Naive thymus-derived CD4-positive, alpha-beta T cell (primary cell): ENCODE measurements at regions of chr3 and their contacts with region 1.

Region 1: GRCh38 chr3:12984023-12984823 is 89.0 kb downstream of the IQSEC1 start:
- DNase-seq: peak in 8 of 9 donors; percentile 41 to 69 (median 58)
- ATAC-seq: peak; percentile 82
- H3K4me3 ChIP-seq: no peak overlapping the region
- H3K4me3 Mint-ChIP-seq: no peak overlapping the region
- H3K27ac ChIP-seq: peak overlapping the region; percentile 11
- H3K27ac Mint-ChIP-seq: peak overlapping the region in 4 of 9 donors; percentile 27 to 79 (median 50)
- H3K4me1 ChIP-seq: peaks cover 29 to 32% of the 10 kb centered on the region in 2 donors
- H3K4me1 Mint-ChIP-seq: peaks cover 29 to 77% (median 67%) of the 10 kb centered on the region in 7 donors
- H3K27me3 ChIP-seq: no peaks in the 10 kb centered on the region
- H3K27me3 Mint-ChIP-seq: no peaks in the 10 kb centered on the region

Region 2: GRCh38 chr3:12719984-12720898 is 264.0 kb before region 1 on chr3:
- CTCF ChIA-PET with region 1: no interaction called
- POLR2A ChIA-PET with region 1: no interaction called
- intact Hi-C with region 1: no loop called
- DNase-seq: peak; percentile 37 to 85 (median 81)
- ATAC-seq: peak; percentile 98
- H3K4me3 ChIP-seq: peak overlapping the region; percentile 50
- H3K4me3 Mint-ChIP-seq: peak overlapping the region; percentile 30 to 79 (median 72)
- H3K27ac ChIP-seq: no peak overlapping the region
- H3K27ac Mint-ChIP-seq: peak overlapping the region; percentile 46 to 93 (median 74)
- H3K4me1 ChIP-seq: peaks cover 0 to 5% of the 10 kb centered on the region in 2 donors
- H3K4me1 Mint-ChIP-seq: peaks cover 6 to 12% (median 9%) of the 10 kb centered on the region in 7 donors
- H3K27me3 ChIP-seq: no peaks in the 10 kb centered on the region
- H3K27me3 Mint-ChIP-seq: no peaks in the 10 kb centered on the region

Region 3: DNA sequence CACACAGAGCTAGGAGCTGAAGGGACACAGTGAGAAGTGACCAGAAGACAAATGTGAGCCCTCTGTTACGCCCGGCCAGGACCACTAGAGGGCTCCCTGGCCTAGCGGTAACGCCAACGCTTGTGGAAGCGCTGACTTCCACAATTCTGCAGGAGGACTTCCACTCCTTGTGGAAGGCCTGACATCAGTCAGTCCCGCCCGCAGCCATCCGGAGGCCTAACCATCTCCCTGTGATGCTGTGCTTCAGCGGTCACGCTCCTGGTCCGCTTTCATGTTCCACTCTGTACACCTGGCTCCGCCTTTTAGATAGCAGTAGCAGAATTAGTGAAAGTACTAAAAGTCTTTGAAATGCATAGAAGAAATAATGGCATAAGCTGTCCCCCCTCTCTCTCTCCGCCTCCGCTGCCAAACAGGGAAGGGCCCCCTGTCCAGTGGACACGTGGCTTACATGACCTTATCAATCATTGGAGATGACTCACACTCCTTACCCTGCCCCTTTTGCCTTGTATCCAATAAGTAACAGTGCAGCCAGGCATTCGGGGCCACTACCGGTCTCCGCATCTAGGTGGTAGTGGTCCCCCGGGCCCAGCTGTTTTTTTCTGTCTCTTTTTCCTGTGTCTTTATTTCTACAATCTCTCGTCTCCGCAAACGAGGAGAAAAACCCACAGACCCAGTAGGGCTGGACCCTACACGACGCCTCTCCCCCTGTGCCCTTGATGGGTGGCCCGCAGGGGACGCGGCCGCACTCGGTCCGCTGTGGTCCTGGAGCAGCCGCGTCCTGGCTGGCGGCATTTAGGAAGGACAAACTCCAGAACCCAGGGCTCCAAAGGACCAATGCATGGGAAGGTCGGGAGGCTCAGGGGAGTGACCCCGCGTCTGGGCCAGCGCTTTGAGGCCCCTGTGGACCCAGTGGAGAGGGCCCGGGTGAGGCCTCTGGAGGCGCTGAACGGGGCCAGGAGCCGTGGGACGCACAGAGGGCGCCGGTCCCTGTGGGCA is 115.9 kb before region 1 on chr3:
- CTCF ChIA-PET with region 1: no interaction called
- POLR2A ChIA-PET with region 1: no interaction called
- intact Hi-C with region 1: loop called (anchors 1 kb)
- DNase-seq: peak; percentile 32 to 68 (median 50)
- ATAC-seq: peak; percentile 87
- H3K4me3 ChIP-seq: peak overlapping the region; percentile 60
- H3K4me3 Mint-ChIP-seq: peak overlapping the region; percentile 79 to 92 (median 86)
- H3K27ac ChIP-seq: no peak overlapping the region
- H3K27ac Mint-ChIP-seq: peak overlapping the region in 2 of 9 donors; percentile 4 to 53
- H3K4me1 ChIP-seq: no peaks in the 10 kb centered on the region
- H3K4me1 Mint-ChIP-seq: peaks cover 0 to 14% (median 10%) of the 10 kb centered on the region in 7 donors
- H3K27me3 ChIP-seq: peaks cover 0 to 5% of the 10 kb centered on the region in 2 donors
- H3K27me3 Mint-ChIP-seq: peaks cover 9 to 35% (median 14%) of the 10 kb centered on the region in 5 donors

Region 4: DNA sequence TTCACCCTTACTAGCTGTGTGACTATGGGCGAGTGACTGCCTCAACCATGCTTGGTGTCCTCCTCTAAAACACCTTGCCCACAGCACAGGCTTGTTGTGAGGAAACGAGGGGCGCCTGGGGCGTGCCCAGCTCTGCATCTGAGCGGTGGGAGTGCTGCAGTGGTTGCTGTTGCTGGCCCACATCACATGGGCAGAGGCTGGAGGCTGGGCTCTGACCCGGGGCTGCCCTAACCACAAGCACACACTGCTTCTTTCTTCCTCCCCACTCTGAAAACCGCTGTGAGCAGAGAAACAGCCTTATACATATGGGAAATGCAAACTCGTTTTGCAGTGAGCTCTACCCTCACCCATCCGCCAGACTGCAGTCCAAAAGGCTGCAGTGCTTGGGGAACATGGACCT is 68.1 kb before region 1 on chr3:
- CTCF ChIA-PET with region 1: no interaction called
- POLR2A ChIA-PET with region 1: no interaction called
- intact Hi-C with region 1: loop called (anchors 1 to 5 kb)
- DNase-seq: peak in 5 of 9 donors; percentile 8 to 29 (median 24)
- ATAC-seq: peak; percentile 78
- H3K4me3 ChIP-seq: no peak overlapping the region
- H3K4me3 Mint-ChIP-seq: peak overlapping the region in 9 of 10 donors; percentile 34 to 61 (median 48)
- H3K27ac ChIP-seq: no peak overlapping the region
- H3K27ac Mint-ChIP-seq: peak overlapping the region; percentile 38 to 87 (median 75)
- H3K4me1 ChIP-seq: peaks cover 12 to 24% of the 10 kb centered on the region in 2 donors
- H3K4me1 Mint-ChIP-seq: peaks cover 17 to 30% (median 24%) of the 10 kb centered on the region in 7 donors
- H3K27me3 ChIP-seq: no peaks in the 10 kb centered on the region
- H3K27me3 Mint-ChIP-seq: no peaks in the 10 kb centered on the region

Region 5: DNA sequence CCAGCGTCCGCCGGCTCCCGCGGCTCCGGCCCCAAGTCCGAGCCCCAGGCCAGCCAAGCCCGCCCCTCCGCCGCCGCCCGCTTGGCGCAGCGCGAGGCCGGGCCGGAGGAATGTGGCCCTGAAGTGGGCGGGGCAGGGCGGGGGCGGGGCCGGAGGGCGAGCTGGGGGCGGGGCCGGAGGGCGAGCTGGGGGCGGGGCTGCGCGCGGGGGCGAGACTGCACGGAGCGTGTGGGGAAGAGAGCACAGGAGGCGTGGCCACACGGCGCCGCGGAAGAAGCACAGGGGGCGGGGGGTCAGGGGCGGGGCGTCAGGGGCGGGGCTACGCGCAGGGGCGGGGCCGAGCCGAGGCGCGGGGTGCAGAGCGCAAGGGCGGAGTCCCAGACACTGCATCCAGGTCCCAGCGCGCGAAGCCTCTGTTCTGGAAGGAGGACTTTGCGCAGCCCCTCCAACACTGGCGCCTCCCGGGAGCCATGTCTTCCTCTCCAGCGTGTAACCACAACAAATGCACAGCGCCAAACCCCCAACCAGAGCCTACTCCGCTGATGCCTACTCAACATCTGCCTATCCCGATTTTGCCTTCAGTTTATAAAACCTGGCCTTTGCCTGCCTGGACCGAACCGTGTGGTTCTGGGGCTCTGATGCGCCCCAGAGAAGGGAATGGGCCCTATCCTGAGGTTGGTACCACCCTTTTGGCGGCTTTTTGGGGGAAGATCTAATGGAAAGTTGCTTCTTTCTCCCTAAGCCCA is 16.4 kb before region 1 on chr3:
- CTCF ChIA-PET with region 1: interaction called, 4 read pairs
- POLR2A ChIA-PET with region 1: interaction called, 7 read pairs
- intact Hi-C with region 1: loop called in 1 of 2 experiments (anchors 2 kb)
- DNase-seq: peak; percentile 71 to 87 (median 83)
- ATAC-seq: peak; percentile 99
- H3K4me3 ChIP-seq: peak overlapping the region; percentile 47
- H3K4me3 Mint-ChIP-seq: peak overlapping the region; percentile 74 to 87 (median 86)
- H3K27ac ChIP-seq: peak overlapping the region; percentile 29
- H3K27ac Mint-ChIP-seq: peak overlapping the region in 4 of 9 donors; percentile 9 to 84 (median 60)
- H3K4me1 ChIP-seq: peaks cover 47 to 53% of the 10 kb centered on the region in 2 donors
- H3K4me1 Mint-ChIP-seq: peaks cover 50 to 86% (median 77%) of the 10 kb centered on the region in 7 donors
- H3K27me3 ChIP-seq: no peaks in the 10 kb centered on the region
- H3K27me3 Mint-ChIP-seq: peaks cover 0 to 5% (median 0%) of the 10 kb centered on the region in 5 donors

Region 6: DNA sequence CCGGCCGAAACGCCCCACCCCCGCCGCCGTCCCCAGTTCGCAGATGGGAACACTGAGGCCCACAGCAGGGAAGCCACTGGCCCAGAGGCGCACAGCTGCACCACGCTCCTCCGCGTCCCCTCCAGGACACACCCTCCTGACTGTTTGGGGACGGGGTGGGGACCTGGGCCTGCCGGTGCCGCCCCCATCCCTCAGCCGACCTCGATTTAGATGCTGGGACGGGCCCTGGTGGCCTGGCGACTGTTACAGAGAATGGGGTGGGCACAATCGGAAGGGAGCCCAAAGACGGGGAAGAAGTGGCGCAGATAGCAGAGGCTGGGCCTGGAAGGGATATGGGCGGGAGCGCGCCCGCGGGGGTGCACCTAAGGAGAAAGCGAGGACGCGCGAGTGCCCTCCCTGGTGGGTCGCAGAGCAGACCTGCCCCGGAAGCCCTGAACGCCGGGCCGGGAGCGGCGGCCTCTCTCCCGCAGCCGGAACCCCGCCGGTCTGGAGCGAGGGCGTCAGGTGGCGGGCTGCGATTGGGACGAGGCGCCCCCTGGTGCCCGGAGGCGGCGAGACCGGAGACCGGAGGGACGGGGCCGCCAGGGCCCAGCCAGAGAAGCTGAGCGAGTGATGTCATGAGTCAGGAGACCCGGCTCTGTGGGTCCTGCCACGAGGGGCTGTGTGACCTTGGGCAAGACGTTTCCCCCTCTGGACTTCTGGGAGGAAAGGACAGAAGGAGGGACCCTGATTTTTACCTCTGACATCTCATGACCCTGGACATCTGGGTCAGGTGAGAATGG is 10.6 kb after region 1 on chr3:
- CTCF ChIA-PET with region 1: interaction called, 8 read pairs
- POLR2A ChIA-PET with region 1: interaction called, 4 read pairs
- intact Hi-C with region 1: loop called in 1 of 2 experiments (anchors 1 kb)
- DNase-seq: peak; percentile 76 to 92 (median 83)
- ATAC-seq: peak; percentile 86
- H3K4me3 ChIP-seq: peak overlapping the region; percentile 69
- H3K4me3 Mint-ChIP-seq: peak overlapping the region; percentile 91 to 97 (median 95)
- H3K27ac ChIP-seq: peak overlapping the region; percentile 77
- H3K27ac Mint-ChIP-seq: peak overlapping the region; percentile 85 to 96 (median 90)
- H3K4me1 ChIP-seq: peaks cover 20 to 30% of the 10 kb centered on the region in 2 donors
- H3K4me1 Mint-ChIP-seq: peaks cover 23 to 80% (median 71%) of the 10 kb centered on the region in 7 donors
- H3K27me3 ChIP-seq: no peaks in the 10 kb centered on the region
- H3K27me3 Mint-ChIP-seq: peaks cover 0 to 5% (median 0%) of the 10 kb centered on the region in 5 donors